AG04449 (cell line): ENCODE measurements at regions of chr17 and their contacts with region 1.

Region 1: GRCh38 chr17:49707608-49708514 is at the start of gene SLC35B1:
- DNase-seq: peak; percentile 93
- H3K4me3 ChIP-seq: peak within 1 kb of the TSS; percentile 91
- CTCF ChIP-seq: peak; percentile 89

Region 2: DNA sequence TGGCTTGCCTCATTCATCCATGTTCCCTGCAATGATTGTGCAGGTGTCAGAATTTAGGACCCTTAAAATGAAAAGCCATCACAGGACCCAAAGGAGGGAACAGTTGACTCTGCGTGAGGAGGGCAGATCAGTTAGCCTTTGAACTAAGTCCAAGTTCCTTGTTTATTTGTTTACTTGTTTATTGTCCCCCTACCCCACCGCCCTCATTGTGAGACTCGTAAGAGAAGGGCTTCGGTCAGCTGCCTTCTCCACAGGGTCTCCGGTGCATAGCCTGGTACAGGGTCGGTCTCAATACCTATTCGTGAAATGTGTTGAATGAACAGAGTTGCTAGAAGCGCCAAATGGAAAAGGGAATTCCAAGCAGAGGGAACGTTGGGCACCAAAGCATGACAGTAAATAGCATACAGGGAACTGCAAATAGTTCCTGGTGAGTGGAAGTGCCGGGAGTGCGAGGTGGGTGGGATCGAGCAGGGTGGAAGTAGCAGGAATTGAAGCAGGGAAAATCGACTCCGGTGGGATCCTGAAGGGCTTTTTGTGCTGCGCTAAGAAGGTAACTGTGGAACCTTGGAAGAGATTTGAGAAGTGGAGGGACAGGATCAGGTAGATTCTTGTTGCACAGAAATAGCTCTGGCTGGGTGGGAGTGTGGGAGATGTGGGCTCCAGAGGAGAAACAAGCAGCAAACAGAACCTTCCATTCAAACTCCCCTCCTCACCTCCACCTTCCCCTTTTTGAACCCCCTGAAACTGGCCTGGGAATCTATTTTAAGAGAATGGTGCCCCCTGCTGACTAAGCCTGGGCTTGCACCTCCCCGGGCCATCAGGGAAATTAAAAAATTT is 12.8 kb before region 1 on chr17:
- CTCF ChIA-PET with region 1: interaction called, 202 read pairs
- POLR2A ChIA-PET with region 1: interaction called, 3 read pairs
- DNase-seq: no peak
- H3K4me3 ChIP-seq: no peak overlapping the region
- CTCF ChIP-seq: peak; percentile 73

Region 3: DNA sequence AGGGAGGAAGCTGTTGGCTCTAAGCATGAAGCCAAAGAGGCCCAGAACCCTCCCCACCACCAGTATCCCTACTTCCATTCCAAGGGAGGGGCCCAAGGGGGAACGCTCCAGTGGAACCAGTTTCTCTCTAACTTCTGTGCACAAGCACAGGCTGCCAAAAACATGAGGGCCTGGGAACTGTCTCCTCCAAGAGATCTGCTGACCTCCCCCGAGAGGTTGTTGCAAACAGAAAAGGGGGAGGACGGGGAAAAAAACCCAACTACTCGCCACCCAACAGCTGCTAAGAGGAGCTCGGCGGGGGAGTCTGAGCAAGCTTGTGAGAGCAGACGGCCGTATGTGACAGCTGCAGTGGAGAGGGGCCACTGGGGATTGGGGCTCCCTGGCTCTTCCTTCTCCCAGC is 15.6 kb after region 1 on chr17:
- CTCF ChIA-PET with region 1: interaction called, 32 read pairs
- POLR2A ChIA-PET with region 1: no interaction called
- DNase-seq: no peak
- H3K4me3 ChIP-seq: no peak overlapping the region
- CTCF ChIP-seq: no peak

Region 4: DNA sequence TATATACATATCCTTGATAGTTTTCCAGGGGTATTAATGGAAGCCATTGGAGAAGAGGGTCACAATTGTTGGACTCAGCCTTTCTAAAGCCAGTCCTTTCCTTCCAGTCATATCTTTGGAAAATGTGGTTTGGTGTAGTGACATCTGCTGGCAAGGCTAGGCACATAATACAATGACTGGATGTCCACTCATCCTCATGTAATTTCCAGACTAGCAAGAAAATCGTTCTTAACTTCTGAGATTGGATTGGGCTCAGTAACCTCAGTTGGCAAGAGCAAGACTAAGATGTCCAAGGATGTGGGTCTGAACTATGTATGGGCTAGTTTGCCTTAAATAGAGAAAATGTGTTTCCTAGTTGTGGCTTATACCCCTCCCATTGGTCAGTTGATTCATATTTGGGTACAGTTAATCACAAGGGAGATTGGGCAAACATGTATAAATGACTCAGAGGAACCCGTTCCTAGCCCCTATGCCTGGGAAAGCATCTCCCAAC is 71.9 kb after region 1 on chr17:
- CTCF ChIA-PET with region 1: interaction called, 13 read pairs
- POLR2A ChIA-PET with region 1: no interaction called
- DNase-seq: peak; percentile 62
- H3K4me3 ChIP-seq: no peak overlapping the region
- CTCF ChIP-seq: peak; percentile 62

Region 5: GRCh38 chr17:49851387-49852291 is 143.8 kb after region 1 on chr17:
- CTCF ChIA-PET with region 1: interaction called, 14 read pairs
- POLR2A ChIA-PET with region 1: interaction called, 3 read pairs
- DNase-seq: no peak
- H3K4me3 ChIP-seq: peak overlapping the region; percentile 63
- CTCF ChIP-seq: peak; percentile 86